Common myeloid progenitor, CD34-positive (primary cell): ENCODE measurements at regions of chr5 and their contacts with region 1.

Region 1: GRCh38 chr5:148808864-148809642 is 17.4 kb upstream of the ADRB2 start:
- DNase-seq: peak; percentile 58 to 91 (median 90)
- H3K4me3 ChIP-seq: peak overlapping the region in 6 of 7 experiments; percentile 23 to 70 (median 48)
- H3K27ac ChIP-seq: peak overlapping the region; percentile 35 to 65
- H3K4me1 ChIP-seq: peaks cover 52 to 84% (median 60%) of the 10 kb centered on the region in 4 experiments
- H3K27me3 ChIP-seq: no peaks in the 10 kb centered on the region

Region 2: DNA sequence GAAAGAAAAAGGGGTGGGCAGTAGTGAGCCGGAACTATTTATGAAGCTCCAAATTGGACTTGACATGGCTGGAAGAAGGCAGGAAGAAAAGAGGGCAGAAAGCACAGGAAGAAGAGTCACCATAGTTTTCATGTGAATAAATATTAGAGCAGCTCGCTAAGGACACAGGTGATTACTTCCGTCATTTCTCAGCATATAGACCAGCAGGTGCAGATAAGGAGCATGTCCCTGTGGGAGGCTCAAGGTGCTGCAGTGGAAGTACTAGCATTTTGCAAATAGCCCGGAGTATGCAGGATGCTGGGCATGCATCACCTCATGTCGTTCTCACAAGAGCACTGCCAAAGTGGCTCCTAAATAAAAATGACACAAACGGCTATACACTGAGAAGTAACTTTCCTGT is 83.4 kb before region 1 on chr5:
- CTCF ChIA-PET with region 1: no interaction called
- POLR2A ChIA-PET with region 1: no interaction called
- DNase-seq: no peak
- H3K4me3 ChIP-seq: no peak overlapping the region
- H3K27ac ChIP-seq: no peak overlapping the region
- H3K4me1 ChIP-seq: no peaks in the 10 kb centered on the region
- H3K27me3 ChIP-seq: peaks cover 0 to 3% (median 0%) of the 10 kb centered on the region in 5 experiments

Region 3: GRCh38 chr5:148820461-148821395 is 11.7 kb after region 1 on chr5:
- CTCF ChIA-PET with region 1: interaction called, 13 read pairs
- POLR2A ChIA-PET with region 1: interaction called, 3 read pairs
- DNase-seq: peak in 2 of 3 donors; percentile 41 to 42
- H3K4me3 ChIP-seq: no peak overlapping the region
- H3K27ac ChIP-seq: no peak overlapping the region
- H3K4me1 ChIP-seq: peaks cover 5 to 34% (median 19%) of the 10 kb centered on the region in 4 experiments
- H3K27me3 ChIP-seq: no peaks in the 10 kb centered on the region